ENCODE measurements at regions of chr1 and their contacts with region 1.

Region 1: GRCh38 chr1:109548321-109549267 is at the start of gene GNAI3:
- DNase-seq: peak; percentile 91 to 93
- ATAC-seq: peak; percentile 97 to 99
- H3K4me3 ChIP-seq: peak within 1 kb of the TSS; percentile 99
- H3K27ac ChIP-seq: peak within 1 kb of the TSS; percentile 95 to 96
- H3K4me1 ChIP-seq: peaks cover 21% of the 10 kb centered on the region
- CTCF ChIP-seq: no peak
- EP300 ChIP-seq: no peak
- POLR2A ChIP-seq: peak; percentile 83
- RAD21 ChIP-seq: no peak
- polyA plus RNA-seq, gene GNAI3: 6.1 and 8.7 TPM in 2 replicates

Region 2: GRCh38 chr1:109559995-109560394 is 11.4 kb after region 1 on chr1:
- CTCF ChIA-PET with region 1: interaction called, 5 read pairs
- POLR2A ChIA-PET with region 1: interaction called, 13 read pairs
- DNase-seq: no peak
- ATAC-seq: no peak
- H3K4me3 ChIP-seq: no peak overlapping the region
- H3K27ac ChIP-seq: no peak overlapping the region
- H3K4me1 ChIP-seq: peaks cover 49% of the 10 kb centered on the region
- CTCF ChIP-seq: no peak
- EP300 ChIP-seq: no peak
- POLR2A ChIP-seq: no peak
- RAD21 ChIP-seq: no peak

Region 3: DNA sequence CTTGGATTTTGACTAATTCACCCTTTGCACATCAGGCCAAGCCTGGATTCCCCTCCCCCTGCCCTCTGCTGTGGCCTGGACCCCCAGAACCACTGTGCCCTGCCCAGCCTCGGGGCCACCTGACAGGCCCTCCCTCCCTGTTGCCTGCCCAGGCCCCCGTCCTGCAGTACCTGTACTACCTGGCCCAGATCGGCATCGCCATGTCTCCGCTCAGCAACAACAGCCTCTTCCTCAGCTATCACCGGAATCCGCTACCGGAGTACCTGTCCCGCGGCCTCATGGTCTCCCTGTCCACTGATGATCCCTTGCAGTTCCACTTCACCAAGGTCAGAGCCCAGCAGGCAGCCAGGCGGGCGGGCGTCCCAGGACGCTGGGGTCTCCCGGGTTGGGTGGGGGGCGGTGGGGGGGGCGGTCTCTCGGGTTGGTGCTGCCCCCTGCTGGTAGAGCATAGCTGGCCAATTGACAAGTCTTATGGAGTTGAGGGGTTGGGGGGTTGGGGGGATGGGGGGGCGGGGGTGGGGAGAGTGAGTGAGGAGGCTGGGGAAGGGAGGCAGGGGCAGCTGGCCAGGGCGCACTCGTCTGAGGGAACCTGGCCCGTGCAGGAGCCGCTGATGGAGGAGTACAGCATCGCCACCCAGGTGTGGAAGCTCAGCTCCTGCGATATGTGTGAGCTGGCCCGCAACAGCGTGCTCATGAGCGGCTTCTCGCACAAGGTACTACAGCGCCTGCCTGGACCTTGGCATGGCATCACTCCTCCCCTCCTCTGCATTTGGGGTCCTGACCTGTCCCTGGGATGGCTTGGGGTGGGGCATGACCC is 81.7 kb after region 1 on chr1:
- CTCF ChIA-PET with region 1: interaction called, 50 read pairs
- POLR2A ChIA-PET with region 1: interaction called, 11 read pairs
- DNase-seq: no peak
- ATAC-seq: peak in 1 of 2 experiments; percentile 10; a peak in 2 of 6 replicates
- H3K4me3 ChIP-seq: no peak overlapping the region
- H3K27ac ChIP-seq: no peak overlapping the region
- H3K4me1 ChIP-seq: peaks cover 16% of the 10 kb centered on the region
- CTCF ChIP-seq: peak; percentile 31; the same call in 1 of the 3 replicates
- EP300 ChIP-seq: no peak
- POLR2A ChIP-seq: no peak
- RAD21 ChIP-seq: no peak; a peak in 2 of 5 replicates

Region 4: GRCh38 chr1:109643385-109644230 is 95.0 kb after region 1 on chr1:
- CTCF ChIA-PET with region 1: interaction called, 73 read pairs
- POLR2A ChIA-PET with region 1: interaction called, 20 read pairs
- DNase-seq: peak; percentile 59 to 75
- ATAC-seq: peak; percentile 96 to 98
- H3K4me3 ChIP-seq: no peak overlapping the region
- H3K27ac ChIP-seq: peak overlapping the region; percentile 73 to 80
- H3K4me1 ChIP-seq: peaks cover 9% of the 10 kb centered on the region; the same call in 2 of the 3 replicates
- CTCF ChIP-seq: peak; percentile 76
- EP300 ChIP-seq: no peak
- POLR2A ChIP-seq: no peak
- RAD21 ChIP-seq: peak; percentile 67 to 74

Region 5: DNA sequence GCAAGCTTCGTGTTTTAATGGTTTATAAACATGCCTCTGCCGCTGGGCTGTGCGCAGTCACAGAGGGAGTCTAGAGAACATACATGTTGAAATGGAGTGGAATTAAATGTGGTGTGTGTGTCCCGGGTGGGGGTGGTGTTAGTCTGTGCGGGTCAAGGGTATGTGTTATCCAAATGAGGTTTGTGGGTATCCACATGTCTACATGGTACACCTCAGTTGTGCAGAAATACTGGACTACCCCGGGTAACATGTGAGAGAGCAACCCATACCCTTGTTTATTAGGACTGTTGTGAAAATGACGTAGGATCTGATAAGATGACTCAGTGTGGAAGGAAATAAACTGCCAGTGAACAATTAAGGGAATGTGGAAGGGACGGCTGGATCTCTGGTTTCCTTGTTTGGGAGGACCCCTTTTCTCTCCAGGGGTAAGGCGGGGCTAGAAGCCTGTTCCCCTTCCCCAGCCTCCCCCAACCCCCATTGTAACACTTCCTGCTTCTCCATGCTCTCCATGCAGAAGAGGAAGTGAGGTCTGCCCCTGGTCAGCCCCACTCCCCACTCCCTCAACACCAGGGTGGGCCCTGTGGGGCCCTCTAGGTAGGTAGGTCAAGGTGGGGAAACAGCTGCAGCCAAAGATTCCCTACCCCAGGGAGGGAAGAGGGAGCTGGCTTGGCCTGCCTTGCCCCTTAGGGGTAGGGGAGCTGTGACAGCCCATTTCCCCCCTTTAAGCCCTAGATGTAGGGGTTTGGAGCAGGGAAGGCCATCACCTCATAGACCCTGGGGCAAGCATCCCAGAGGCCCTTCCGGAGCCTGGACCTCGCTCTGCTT is 214.4 kb after region 1 on chr1:
- CTCF ChIA-PET with region 1: interaction called, 10 read pairs
- POLR2A ChIA-PET with region 1: no interaction called
- DNase-seq: no peak
- ATAC-seq: no peak
- H3K4me3 ChIP-seq: peak overlapping the region; percentile 23; the same call in 1 of the 3 replicates
- H3K27ac ChIP-seq: peak overlapping the region; percentile 70 to 79
- H3K4me1 ChIP-seq: peaks cover 18% of the 10 kb centered on the region
- CTCF ChIP-seq: no peak
- EP300 ChIP-seq: no peak
- POLR2A ChIP-seq: no peak
- RAD21 ChIP-seq: no peak

Measured in A549 (cell line).